ENCODE measurements at regions of chr11 and their contacts with region 1.

Region 1: DNA sequence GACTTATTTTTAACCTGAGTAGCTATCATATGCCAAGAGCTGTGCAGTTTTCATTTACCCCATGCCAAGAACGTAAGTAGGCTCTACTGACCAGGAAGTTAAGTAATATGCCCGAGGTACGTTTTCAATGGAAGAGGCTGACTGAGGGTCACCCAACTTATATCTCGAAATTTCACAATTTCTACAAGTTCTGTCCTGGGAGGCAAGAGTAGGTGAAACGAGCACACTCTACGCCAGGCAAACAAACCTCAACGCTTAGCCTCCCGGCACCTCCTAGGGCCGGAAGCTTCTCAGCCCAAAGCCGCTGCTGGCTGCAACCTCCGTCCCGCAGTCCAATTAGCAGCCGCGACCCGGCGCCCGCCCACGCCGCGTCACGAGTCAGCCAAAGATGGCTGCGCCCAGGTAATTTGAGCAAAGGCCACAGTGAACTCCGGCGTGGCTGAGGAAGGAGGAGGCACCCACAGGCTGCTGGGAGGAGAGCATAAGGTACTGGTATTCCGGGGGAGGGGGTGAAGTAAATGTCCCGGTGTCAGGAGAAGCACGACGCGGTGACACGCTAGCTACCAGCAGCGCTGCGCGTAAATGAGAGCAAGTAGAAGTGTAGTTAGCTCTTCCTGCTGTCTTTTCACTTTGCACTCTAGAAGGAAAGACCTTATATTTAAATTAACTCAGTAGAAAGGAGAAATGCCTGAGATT is at the start of gene TMEM126A:
- H3K4me3 Mint-ChIP-seq: peak within 1 kb of the TSS; percentile 95
- H3K27ac Mint-ChIP-seq: peak within 1 kb of the TSS; percentile 88
- H3K4me1 Mint-ChIP-seq: peaks cover 6% of the 10 kb centered on the region
- H3K27me3 Mint-ChIP-seq: peaks cover 23% of the 10 kb centered on the region

Region 2: GRCh38 chr11:85595285-85595884 is 52.4 kb before region 1 on chr11:
- intact Hi-C with region 1: no loop called
- H3K4me3 Mint-ChIP-seq: no peak overlapping the region
- H3K27ac Mint-ChIP-seq: no peak overlapping the region
- H3K4me1 Mint-ChIP-seq: peaks cover 5% of the 10 kb centered on the region
- H3K27me3 Mint-ChIP-seq: peaks cover 2% of the 10 kb centered on the region

Region 3: DNA sequence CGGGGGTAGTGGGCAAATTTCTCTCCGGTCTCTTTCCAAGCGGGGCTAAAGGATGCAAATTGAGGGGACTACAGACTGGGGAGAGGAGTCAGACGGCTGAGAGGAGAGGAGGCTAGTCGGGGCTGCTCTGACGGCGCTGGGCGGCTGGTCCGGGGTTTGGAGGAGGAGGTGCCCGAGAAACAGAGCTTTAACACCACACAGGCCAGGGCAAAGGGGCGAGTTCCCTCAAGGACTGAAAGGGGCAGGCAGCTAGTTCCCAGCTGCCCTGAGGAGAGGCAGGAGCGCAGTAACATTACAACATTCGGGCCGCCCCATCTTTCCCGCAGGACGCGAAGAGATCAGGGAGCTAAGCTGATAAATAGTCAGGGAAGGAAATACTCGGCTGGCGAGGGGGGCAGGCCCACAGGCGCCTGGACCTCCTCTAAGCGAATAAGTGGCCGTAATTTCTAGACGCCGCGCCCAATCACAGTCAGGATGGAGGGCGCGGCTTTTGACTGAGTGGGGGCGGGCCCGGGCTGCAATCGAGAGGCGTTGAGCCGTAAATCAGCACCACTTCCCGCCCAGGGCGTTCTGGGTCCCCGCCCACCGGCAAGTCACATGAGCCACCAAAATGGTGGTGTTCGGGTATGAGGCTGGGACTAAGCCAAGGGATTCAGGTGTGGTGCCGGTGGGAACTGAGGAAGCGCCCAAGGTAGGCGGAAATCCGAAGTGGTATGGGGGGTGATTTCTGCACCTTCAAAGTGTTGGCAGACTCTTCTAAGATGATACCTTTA is 19.6 kb before region 1 on chr11 and contains the start of gene TMEM126B:
- intact Hi-C with region 1: loop called (anchors 1 kb)
- H3K4me3 Mint-ChIP-seq: peak within 1 kb of the TSS; percentile 95
- H3K27ac Mint-ChIP-seq: peak within 1 kb of the TSS; percentile 93
- H3K4me1 Mint-ChIP-seq: peaks cover 21% of the 10 kb centered on the region
- H3K27me3 Mint-ChIP-seq: peaks cover 2% of the 10 kb centered on the region

Region 4: DNA sequence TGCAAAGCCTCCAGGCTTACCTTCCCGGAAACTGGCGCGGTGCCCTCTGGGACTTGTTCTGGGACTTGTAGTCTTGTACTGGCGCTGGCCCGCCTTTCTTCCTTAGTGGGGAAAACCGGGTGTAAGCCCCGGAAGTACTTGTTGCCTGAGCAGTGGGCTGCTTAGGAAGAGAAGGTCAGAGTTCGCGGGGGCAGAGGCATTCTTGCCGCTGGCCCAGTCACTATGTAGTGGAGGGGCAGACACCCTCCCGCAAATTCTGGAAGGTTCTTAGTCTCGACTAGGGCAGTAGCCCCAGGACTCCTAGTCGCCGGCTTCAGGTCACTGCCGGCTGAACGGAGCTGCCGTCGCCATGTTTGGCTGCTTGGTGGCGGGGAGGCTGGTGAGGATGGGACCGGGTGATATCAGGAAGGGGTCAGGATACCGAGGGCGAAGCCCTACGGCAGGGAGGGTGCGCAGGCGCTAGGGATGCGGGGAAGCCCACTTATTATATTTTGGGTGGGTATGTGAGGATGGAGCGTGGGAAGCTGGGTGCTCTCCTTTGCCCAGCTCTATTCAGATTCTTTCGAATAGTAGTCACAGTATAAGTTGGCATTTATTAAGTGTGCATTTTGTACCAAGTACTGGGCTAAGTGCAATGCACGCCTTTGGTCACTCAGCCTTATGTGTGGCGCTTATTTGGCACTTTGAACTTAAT is 654.5 kb after region 1 on chr11 and contains the start of gene HIKESHI:
- intact Hi-C with region 1: loop called (anchors 2 kb)
- H3K4me3 Mint-ChIP-seq: peak within 1 kb of the TSS; percentile 97
- H3K27ac Mint-ChIP-seq: peak within 1 kb of the TSS; percentile 95
- H3K4me1 Mint-ChIP-seq: peaks cover 20% of the 10 kb centered on the region
- H3K27me3 Mint-ChIP-seq: peaks cover 1% of the 10 kb centered on the region